Upper lobe of right lung (tissue), 1 donor: ENCODE measurements at regions of chr7 and their contacts with region 1.

Region 1: GRCh38 chr7:98168181-98168905 is 42.9 kb upstream of the BHLHA15 start:
- DNase-seq: no peak
- ATAC-seq: peak; percentile 83
- H3K4me3 ChIP-seq: no peak overlapping the region
- H3K27ac ChIP-seq: no peak overlapping the region
- H3K4me1 ChIP-seq: peaks cover 4% of the 10 kb centered on the region
- H3K27me3 ChIP-seq: no peaks in the 10 kb centered on the region
- CTCF ChIP-seq: peak; percentile 85

Region 2: GRCh38 chr7:98034081-98035035 is 134.0 kb before region 1 on chr7:
- intact Hi-C with region 1: loop called (anchors 10 kb)
- DNase-seq: no peak
- ATAC-seq: no peak
- H3K4me3 ChIP-seq: no peak overlapping the region
- H3K27ac ChIP-seq: no peak overlapping the region
- H3K4me1 ChIP-seq: no peaks in the 10 kb centered on the region
- H3K27me3 ChIP-seq: peaks cover 3% of the 10 kb centered on the region
- CTCF ChIP-seq: no peak

Region 3: DNA sequence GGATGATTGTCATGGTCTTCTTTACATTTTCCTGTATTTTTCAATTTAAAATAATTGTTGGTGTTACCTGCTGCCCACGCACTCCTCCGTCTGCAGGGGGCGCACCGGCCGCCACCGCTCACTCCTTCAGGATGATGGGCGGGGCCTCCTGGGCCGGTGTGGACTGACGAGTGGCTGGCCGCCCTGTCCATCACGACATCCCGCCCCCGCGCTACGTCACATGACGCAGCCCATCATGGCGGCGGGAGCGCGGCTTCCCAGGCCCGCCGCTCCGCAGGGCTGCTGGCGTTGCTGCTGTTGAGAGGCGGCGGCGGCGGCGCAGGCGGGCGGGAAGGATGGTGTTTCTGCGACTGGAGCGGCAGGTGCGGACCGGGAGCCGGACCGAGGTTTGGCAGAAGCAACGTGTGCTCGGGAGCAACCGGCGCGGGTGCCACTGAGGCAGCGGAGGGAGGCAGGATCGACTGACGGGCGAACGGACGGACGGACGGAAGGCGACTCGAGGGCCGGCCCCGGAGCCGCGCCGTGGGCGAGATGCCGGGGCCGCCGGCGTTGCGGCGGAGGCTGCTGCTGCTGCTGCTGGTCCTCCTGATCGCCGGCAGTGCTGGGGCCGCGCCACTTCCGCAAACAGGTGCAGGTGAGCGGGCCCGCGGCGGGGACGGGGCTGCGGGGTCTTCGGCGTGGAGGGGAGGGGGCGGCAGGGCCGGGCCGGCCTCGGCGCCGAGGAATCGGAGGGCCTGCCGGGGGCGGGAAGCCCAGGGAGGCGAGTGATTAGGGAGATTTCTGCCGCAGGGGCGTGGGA is 61.5 kb before region 1 on chr7 and contains the start of gene LMTK2:
- intact Hi-C with region 1: loop called (anchors 5 kb)
- DNase-seq: peak; percentile 97
- ATAC-seq: peak; percentile 100
- H3K4me3 ChIP-seq: peak within 1 kb of the TSS; percentile 98
- H3K27ac ChIP-seq: peak within 1 kb of the TSS; percentile 88
- H3K4me1 ChIP-seq: peaks cover 26% of the 10 kb centered on the region
- H3K27me3 ChIP-seq: no peaks in the 10 kb centered on the region
- CTCF ChIP-seq: peak; percentile 97
- total RNA-seq, gene LMTK2: 40.8 TPM